ENCODE measurements at regions of chr11 and their contacts with region 1.

Region 1: GRCh38 chr11:82900277-82901164 is at the start of gene PRCP:
- DNase-seq: peak; percentile 81 to 94 (median 89)
- ATAC-seq: peak; percentile 87
- H3K4me3 ChIP-seq: peak within 1 kb of the TSS; percentile 73
- H3K4me3 Mint-ChIP-seq: peak within 1 kb of the TSS; percentile 93 to 100 (median 98)
- H3K27ac ChIP-seq: peak within 1 kb of the TSS; percentile 92
- H3K27ac Mint-ChIP-seq: peak within 1 kb of the TSS; percentile 92 to 100 (median 100)
- H3K4me1 ChIP-seq: peaks cover 12 to 13% of the 10 kb centered on the region in 2 donors
- H3K4me1 Mint-ChIP-seq: peaks cover 26 to 58% (median 34%) of the 10 kb centered on the region in 7 donors
- H3K27me3 ChIP-seq: no peaks in the 10 kb centered on the region
- H3K27me3 Mint-ChIP-seq: no peaks in the 10 kb centered on the region
- total RNA-seq, gene PRCP: 19.9 to 42.3 (median 31.8) TPM

Region 2: GRCh38 chr11:81869351-81870065 is 1031.0 kb before region 1 on chr11:
- CTCF ChIA-PET with region 1: no interaction called
- POLR2A ChIA-PET with region 1: no interaction called
- intact Hi-C with region 1: loop called in 1 of 2 experiments (anchors 1 kb)
- DNase-seq: peak in 8 of 9 donors; percentile 84 to 94 (median 92)
- ATAC-seq: peak; percentile 94
- H3K4me3 ChIP-seq: peak overlapping the region; percentile 48
- H3K4me3 Mint-ChIP-seq: peak overlapping the region; percentile 66 to 94 (median 78)
- H3K27ac ChIP-seq: peak overlapping the region; percentile 1
- H3K27ac Mint-ChIP-seq: peak overlapping the region; percentile 9 to 96 (median 92)
- H3K4me1 ChIP-seq: peaks cover 27 to 32% of the 10 kb centered on the region in 2 donors
- H3K4me1 Mint-ChIP-seq: peaks cover 35 to 70% (median 57%) of the 10 kb centered on the region in 7 donors
- H3K27me3 ChIP-seq: no peaks in the 10 kb centered on the region
- H3K27me3 Mint-ChIP-seq: peaks cover 0 to 24% (median 0%) of the 10 kb centered on the region in 5 donors

Region 3: GRCh38 chr11:82682003-82682751 is 218.3 kb before region 1 on chr11:
- CTCF ChIA-PET with region 1: no interaction called
- POLR2A ChIA-PET with region 1: no interaction called
- intact Hi-C with region 1: no loop called
- DNase-seq: peak in 7 of 9 donors; percentile 24 to 55 (median 38)
- ATAC-seq: peak; percentile 72
- H3K4me3 ChIP-seq: no peak overlapping the region
- H3K4me3 Mint-ChIP-seq: peak overlapping the region in 1 of 10 donors; percentile 5
- H3K27ac ChIP-seq: no peak overlapping the region
- H3K27ac Mint-ChIP-seq: peak overlapping the region in 2 of 9 donors; percentile 2 to 19
- H3K4me1 ChIP-seq: no peaks in the 10 kb centered on the region
- H3K4me1 Mint-ChIP-seq: peaks cover 0 to 5% (median 0%) of the 10 kb centered on the region in 7 donors
- H3K27me3 ChIP-seq: no peaks in the 10 kb centered on the region
- H3K27me3 Mint-ChIP-seq: peaks cover 8 to 20% (median 17%) of the 10 kb centered on the region in 5 donors

Region 4: DNA sequence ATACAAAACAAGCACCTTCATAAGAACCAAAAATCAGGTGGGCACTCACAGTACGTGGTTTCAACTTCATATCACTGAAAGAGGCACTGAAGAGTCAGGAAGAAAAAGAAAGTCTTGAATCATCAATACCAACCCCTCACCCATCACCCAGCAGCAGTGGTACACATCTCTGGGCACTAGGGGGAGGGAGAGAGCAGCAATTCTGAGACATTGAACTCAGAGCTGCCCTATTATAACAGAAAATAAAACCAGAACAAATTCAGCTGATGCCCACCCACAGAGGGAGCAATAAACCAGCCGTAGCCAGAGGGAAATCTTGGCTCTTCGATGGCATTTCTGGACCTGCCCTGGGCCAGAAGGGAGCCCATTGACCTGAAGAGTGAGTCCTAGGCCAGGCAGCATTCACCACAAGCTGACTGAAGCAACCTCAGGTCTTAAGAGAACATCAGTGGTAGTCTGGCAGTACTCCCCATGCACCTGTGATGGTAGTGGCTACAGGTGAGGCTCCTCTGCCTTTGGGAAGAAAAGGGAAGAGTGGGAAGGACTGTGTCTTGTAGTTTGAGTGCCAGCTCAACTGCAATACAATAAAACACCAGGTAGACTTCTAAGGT is 124.7 kb before region 1 on chr11:
- CTCF ChIA-PET with region 1: no interaction called
- POLR2A ChIA-PET with region 1: no interaction called
- intact Hi-C with region 1: loop called in 1 of 2 experiments (anchors 1 kb)
- DNase-seq: peak in 7 of 9 donors; percentile 6 to 34 (median 16)
- ATAC-seq: peak; percentile 82
- H3K4me3 ChIP-seq: no peak overlapping the region
- H3K4me3 Mint-ChIP-seq: no peak overlapping the region
- H3K27ac ChIP-seq: no peak overlapping the region
- H3K27ac Mint-ChIP-seq: no peak overlapping the region
- H3K4me1 ChIP-seq: no peaks in the 10 kb centered on the region
- H3K4me1 Mint-ChIP-seq: peaks cover 0 to 2% (median 0%) of the 10 kb centered on the region in 7 donors
- H3K27me3 ChIP-seq: no peaks in the 10 kb centered on the region
- H3K27me3 Mint-ChIP-seq: peaks cover 0 to 33% (median 0%) of the 10 kb centered on the region in 5 donors

Region 5: DNA sequence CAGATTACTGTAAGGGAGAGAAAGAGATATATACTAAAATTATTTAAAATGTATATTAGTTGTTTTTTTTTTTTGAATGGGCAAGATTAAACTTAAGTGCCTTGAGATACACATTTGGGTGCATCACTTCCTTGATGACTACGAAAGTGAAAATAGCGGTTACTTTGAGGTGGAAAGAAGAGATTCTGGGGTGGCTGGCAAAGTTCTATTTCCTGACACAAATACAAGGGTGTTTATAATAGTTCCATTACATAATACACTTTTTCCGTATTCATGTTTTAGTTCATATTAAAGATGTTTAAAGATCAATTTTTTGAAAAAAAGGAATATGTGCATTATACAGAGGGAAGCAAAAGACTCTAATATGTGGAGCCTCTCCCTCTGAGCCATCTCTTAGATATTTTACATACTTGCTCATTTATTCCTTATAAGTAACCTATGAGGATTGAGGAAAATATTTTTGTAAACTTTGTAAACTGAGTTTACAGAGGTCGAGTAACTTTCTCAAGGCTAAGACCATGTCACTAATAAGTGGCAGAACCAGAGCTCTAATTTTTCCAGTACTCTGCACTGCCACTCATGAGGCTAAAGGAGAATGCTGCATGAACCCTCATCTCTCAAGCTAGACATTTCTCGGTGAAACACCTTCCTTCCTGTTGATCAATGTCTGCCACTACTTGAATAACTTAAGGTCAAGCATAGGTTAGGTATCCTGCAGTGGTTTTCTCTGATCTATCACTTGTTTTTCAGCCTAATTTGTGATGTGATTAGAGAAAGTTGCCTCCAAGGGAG is 59.7 kb after region 1 on chr11:
- CTCF ChIA-PET with region 1: no interaction called
- POLR2A ChIA-PET with region 1: interaction called, 48 read pairs
- intact Hi-C with region 1: loop called (anchors 1 kb)
- DNase-seq: peak in 7 of 9 donors; percentile 71 to 89 (median 86)
- ATAC-seq: peak; percentile 92
- H3K4me3 ChIP-seq: peak overlapping the region; percentile 37
- H3K4me3 Mint-ChIP-seq: peak overlapping the region; percentile 52 to 88 (median 80)
- H3K27ac ChIP-seq: peak overlapping the region; percentile 74
- H3K27ac Mint-ChIP-seq: peak overlapping the region; percentile 84 to 99 (median 98)
- H3K4me1 ChIP-seq: peaks cover 49 to 82% of the 10 kb centered on the region in 2 donors
- H3K4me1 Mint-ChIP-seq: peaks cover 37 to 96% (median 90%) of the 10 kb centered on the region in 7 donors
- H3K27me3 ChIP-seq: no peaks in the 10 kb centered on the region
- H3K27me3 Mint-ChIP-seq: peaks cover 0 to 8% (median 0%) of the 10 kb centered on the region in 5 donors

Region 6: DNA sequence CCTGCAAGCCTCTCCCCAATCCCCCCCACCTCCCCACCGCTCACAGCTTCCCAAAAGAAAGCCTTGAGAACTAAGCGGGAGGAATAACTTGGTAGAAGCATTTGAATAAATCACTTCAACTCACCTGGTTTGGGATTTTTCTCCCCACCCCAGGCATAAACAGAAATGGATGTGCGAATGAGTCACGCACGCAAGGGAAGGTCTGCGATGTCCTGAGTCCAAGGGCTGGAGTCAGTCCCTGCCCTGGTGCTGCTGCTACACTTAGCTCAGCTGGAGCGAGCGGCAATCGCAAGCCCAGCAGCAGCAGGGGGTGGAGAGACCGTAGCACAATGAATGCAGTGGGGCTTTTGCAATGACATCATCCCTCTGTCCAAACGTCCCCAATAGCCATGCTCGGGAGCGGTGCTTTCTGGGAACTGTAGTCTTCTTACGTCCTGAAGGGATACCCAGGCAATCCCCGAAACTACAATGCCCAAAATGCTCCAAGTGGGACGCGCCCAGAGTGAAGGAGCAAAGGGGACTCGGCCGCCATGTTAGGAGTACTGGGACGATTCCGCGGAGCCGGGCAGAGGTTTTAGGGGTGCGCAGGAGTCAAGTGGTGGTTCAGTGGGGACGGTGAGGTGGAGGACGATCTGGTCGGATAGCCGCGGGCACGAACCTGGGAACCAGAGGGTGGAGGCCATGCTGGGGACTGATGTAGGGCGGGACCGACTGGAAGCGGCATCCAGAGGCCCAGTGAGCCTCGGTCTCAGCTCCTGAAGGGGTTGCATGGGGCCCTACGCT is 171.2 kb after region 1 on chr11 and contains the start of gene RAB30:
- CTCF ChIA-PET with region 1: interaction called, 4 read pairs
- POLR2A ChIA-PET with region 1: interaction called, 21 read pairs
- intact Hi-C with region 1: loop called (anchors 1 kb)
- DNase-seq: peak; percentile 72 to 98 (median 92)
- ATAC-seq: peak; percentile 97
- H3K4me3 ChIP-seq: peak within 1 kb of the TSS; percentile 89
- H3K4me3 Mint-ChIP-seq: no peak within 1 kb of the TSS
- H3K27ac ChIP-seq: peak within 1 kb of the TSS; percentile 92
- H3K27ac Mint-ChIP-seq: no peak within 1 kb of the TSS
- H3K4me1 ChIP-seq: peaks cover 26 to 33% of the 10 kb centered on the region in 2 donors
- H3K4me1 Mint-ChIP-seq: peaks cover 0 to 43% (median 19%) of the 10 kb centered on the region in 7 donors
- H3K27me3 ChIP-seq: no peaks in the 10 kb centered on the region
- H3K27me3 Mint-ChIP-seq: peaks cover 0 to 4% (median 0%) of the 10 kb centered on the region in 5 donors
- total RNA-seq, gene RAB30: 7.4 to 50.2 (median 24.7) TPM

Region 7: DNA sequence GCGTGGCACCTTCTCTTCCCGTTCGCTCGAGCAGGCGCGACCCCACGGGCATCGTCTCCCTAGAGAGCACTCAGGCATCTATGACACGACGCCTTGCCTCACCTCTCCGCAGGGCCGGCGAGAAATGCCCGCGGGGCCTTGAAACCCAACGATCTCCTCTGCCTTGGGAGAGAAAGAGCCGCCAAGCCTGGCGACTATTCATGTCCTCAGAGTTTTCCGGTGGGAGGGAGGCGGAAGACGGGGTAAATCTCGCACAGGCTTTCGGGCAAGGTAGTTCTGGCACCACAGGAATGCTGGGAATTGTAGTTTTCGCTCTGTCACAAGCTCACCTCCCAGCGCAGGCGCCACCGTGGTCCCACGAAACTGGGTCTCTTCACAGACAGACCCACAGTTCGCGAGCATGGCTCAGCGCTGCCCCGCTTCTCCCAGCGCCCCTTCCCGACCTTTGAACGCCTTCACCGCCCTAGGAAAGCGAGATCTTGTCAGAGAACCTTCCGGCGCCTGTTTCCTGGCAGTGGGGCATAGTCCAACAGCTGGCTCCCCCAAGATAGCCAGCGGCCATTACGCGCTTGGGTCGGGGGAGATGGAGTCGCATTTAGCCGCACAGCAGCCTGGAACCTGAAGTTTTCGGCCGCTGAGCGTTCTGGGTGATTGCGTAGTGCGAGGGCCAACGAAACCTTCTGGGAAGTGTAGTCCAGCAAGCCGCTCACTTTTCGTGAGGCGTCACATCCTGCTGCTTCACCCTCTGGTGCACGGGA is 385.4 kb after region 1 on chr11 and contains the start of gene CCDC90B:
- CTCF ChIA-PET with region 1: interaction called, 5 read pairs
- POLR2A ChIA-PET with region 1: interaction called, 32 read pairs
- intact Hi-C with region 1: loop called (anchors 1 kb)
- DNase-seq: peak; percentile 83 to 97 (median 96)
- ATAC-seq: peak; percentile 93
- H3K4me3 ChIP-seq: peak within 1 kb of the TSS; percentile 93
- H3K4me3 Mint-ChIP-seq: peak within 1 kb of the TSS; percentile 92 to 100 (median 98)
- H3K27ac ChIP-seq: peak within 1 kb of the TSS; percentile 95
- H3K27ac Mint-ChIP-seq: peak within 1 kb of the TSS; percentile 98 to 100 (median 99)
- H3K4me1 ChIP-seq: peaks cover 14 to 23% of the 10 kb centered on the region in 2 donors
- H3K4me1 Mint-ChIP-seq: peaks cover 19 to 52% (median 36%) of the 10 kb centered on the region in 7 donors
- H3K27me3 ChIP-seq: no peaks in the 10 kb centered on the region
- H3K27me3 Mint-ChIP-seq: peaks cover 0 to 11% (median 0%) of the 10 kb centered on the region in 5 donors
- total RNA-seq, gene CCDC90B: 19.1 to 40.8 (median 27.8) TPM